Left cardiac atrium (tissue), 4 donors: ENCODE measurements at regions of chr7 and their contacts with region 1.

Region 1: DNA sequence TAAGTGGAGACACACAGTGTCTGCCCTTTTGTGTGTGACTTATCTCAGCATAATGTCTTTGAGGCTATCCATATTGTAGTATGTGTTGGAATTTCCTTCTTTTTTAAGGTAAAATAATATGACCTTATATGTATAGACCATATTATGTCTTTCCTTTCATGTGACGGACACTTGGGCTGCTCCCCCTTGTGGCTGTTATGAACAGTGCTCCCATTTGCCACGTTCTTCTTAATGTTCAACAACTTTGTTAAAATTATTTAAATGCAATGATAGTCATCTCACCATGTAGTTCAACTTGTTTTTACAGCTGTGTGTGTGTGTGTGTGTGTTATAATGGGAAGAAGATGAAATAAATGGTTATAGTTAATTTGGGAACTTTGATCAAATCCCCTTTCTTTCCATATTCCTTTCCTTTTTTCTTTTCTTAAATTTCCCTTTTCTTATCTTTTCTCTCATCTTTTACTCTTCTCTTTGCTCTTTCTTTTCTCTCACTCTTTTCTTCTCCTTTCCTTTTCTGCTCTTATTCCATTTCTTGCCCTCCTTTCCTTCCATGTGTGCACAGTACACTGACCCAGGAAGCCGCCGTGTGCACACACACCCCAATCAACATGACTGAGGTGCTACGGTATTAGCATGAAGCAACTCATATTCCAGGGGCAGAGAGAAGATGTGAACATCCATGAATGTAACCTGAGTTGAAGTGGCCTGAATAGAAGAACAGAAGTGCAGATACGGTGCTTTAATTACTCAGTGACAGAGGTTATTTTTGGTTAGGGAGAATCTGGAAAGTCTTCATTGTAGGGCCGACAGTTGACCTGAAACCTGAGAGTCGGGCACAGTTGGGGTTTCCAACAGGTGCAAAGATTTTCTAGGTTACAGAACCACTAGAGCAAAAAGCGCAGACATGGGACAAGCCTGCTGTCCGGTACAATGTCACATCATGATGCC is 596.7 kb downstream of the SDK1 start:
- DNase-seq: peak; percentile 32
- ATAC-seq: peak in 1 of 2 donors; percentile 23

Region 2: GRCh38 chr7:2864999-2865670 is 1032.6 kb before region 1 on chr7:
- intact Hi-C with region 1: loop called (anchors 5 to 10 kb)
- DNase-seq: peak; percentile 73
- ATAC-seq: peak; percentile 22 to 38

Region 3: DNA sequence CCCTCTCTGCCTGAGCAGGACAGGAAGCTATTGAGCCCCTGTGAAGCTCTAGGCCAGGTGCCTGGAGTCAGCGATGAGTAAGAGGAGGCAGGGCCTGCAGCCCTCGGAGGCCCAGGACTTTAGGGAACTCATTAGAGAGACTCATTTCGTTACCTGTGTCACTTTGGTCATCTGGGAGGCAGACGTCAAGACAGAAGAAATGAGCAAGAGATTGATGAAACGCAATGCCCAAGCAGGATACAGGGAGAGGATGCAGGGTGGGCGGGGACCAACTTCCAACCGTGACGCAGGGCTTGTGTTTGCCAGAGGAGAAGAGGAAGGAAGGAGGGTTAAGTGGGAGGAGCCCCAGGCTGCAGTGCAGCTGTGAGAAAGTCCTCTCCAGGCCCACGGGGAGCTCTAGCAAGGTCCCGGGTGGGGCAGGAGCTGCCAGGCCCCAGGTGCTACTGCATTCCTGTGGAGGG is 1027.2 kb before region 1 on chr7:
- intact Hi-C with region 1: loop called (anchors 5 to 10 kb)
- DNase-seq: peak; percentile 86
- ATAC-seq: peak; percentile 74 to 86

Region 4: GRCh38 chr7:3300651-3301378 is 596.9 kb before region 1 on chr7 and contains the start of gene SDK1:
- intact Hi-C with region 1: loop called in 1 of 2 experiments (anchors 5 kb)
- DNase-seq: peak; percentile 94
- ATAC-seq: peak; percentile 99
- total RNA-seq, gene SDK1: 2.0 to 2.8 TPM

Region 5: GRCh38 chr7:3312583-3312982 is 585.1 kb before region 1 on chr7:
- intact Hi-C with region 1: loop called in 1 of 2 experiments (anchors 10 kb)
- DNase-seq: no peak
- ATAC-seq: no peak